Activated CD4-positive, alpha-beta T cell treated with anti-CD3 and anti-CD28 coated beads for 36 hours (primary cell): ENCODE measurements at regions of chr5 and their contacts with region 1.

Region 1: DNA sequence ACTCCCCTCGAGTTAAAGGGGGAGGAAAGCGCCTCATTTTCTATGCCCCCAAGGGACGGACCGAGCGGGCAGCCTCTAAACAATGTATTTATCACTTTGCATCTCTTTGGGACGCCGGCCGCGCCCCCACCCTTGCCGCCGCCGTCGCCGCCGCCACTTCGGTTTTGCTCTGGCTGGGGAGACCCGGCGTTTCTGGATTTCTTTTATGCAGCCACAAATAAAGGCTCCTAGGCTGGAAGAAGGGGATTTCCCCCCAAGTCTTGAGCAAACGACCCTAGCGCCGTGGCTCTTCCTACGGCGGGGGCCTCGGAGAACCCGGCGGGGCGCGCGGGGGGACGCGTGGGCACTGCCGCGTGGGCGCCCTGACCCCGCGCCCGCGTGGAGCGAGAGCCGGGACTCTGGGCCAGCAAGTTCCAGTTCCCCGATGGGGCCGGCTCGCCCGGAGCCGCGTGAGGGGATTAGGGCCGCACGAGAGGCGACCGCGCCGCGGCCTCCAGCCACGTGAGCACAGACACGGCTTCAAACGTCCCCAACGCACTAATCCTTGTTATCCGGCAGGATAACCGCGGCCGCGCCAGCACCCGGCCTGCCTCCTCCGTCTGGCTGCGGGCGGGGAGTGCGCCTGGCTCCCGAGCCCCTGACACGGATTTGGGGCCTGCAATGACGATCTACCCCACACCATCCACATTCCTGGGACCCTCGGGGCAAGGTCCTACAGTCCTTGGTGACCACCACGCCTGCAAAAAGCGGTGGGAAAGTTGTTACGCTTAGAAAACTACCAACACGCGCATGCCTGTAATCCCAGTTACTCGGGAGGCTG is 7.9 kb upstream of the NEUROG1 start:
- DNase-seq: no peak
- ATAC-seq: no peak
- H3K4me3 Mint-ChIP-seq: peak overlapping the region; percentile 70
- H3K27ac Mint-ChIP-seq: no peak overlapping the region
- H3K4me1 Mint-ChIP-seq: peaks cover 9% of the 10 kb centered on the region
- H3K27me3 Mint-ChIP-seq: peaks cover 72% of the 10 kb centered on the region

Region 2: GRCh38 chr5:135024956-135025729 is 518.6 kb before region 1 on chr5:
- CTCF ChIA-PET with region 1: no interaction called
- POLR2A ChIA-PET with region 1: no interaction called
- intact Hi-C with region 1: loop called in 1 of 2 experiments (anchors 5 kb)
- DNase-seq: no peak
- ATAC-seq: no peak
- H3K4me3 Mint-ChIP-seq: no peak overlapping the region
- H3K27ac Mint-ChIP-seq: no peak overlapping the region
- H3K4me1 Mint-ChIP-seq: peaks cover 10% of the 10 kb centered on the region
- H3K27me3 Mint-ChIP-seq: peaks cover 30% of the 10 kb centered on the region

Region 3: GRCh38 chr5:135488727-135489465 is 54.8 kb before region 1 on chr5:
- CTCF ChIA-PET with region 1: no interaction called
- POLR2A ChIA-PET with region 1: no interaction called
- intact Hi-C with region 1: loop called (anchors 2 to 5 kb)
- DNase-seq: no peak
- ATAC-seq: no peak
- H3K4me3 Mint-ChIP-seq: no peak overlapping the region
- H3K27ac Mint-ChIP-seq: no peak overlapping the region
- H3K4me1 Mint-ChIP-seq: peaks cover 8% of the 10 kb centered on the region
- H3K27me3 Mint-ChIP-seq: peaks cover 70% of the 10 kb centered on the region

Region 4: DNA sequence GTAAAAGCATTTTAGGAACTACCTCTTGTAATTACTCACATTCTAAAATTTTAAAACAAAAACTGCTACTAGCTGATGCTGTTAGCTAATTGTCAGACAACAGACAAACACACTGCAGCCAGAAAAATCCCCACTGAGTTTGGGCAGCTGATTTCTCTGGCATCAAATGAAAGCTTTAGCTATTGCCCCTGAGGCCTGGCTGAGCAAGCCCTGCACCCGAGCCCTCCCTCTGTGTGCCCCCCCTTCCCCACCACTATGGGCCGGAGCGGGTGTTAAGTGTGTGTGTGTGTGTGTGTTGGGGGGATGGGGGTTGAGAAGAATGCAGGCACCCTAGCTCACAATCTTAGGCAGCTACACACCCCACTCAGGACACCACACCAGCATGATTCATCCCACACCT is 10.4 kb before region 1 on chr5:
- CTCF ChIA-PET with region 1: no interaction called
- POLR2A ChIA-PET with region 1: no interaction called
- intact Hi-C with region 1: no loop called
- DNase-seq: no peak
- ATAC-seq: no peak
- H3K4me3 Mint-ChIP-seq: no peak overlapping the region
- H3K27ac Mint-ChIP-seq: no peak overlapping the region
- H3K4me1 Mint-ChIP-seq: peaks cover 8% of the 10 kb centered on the region
- H3K27me3 Mint-ChIP-seq: peaks cover 63% of the 10 kb centered on the region